ENCODE measurements at regions of chr10 and their contacts with region 1.

Region 1: GRCh38 chr10:122565728-122566206 is 5.2 kb downstream of the DMBT1 start:
- DNase-seq: peak; percentile 93
- H3K4me3 Mint-ChIP-seq: peak overlapping the region; percentile 68
- H3K27ac Mint-ChIP-seq: no peak overlapping the region
- H3K4me1 Mint-ChIP-seq: peaks cover 12% of the 10 kb centered on the region
- H3K27me3 Mint-ChIP-seq: no peaks in the 10 kb centered on the region
- CTCF ChIP-seq: peak; percentile 83

Region 2: DNA sequence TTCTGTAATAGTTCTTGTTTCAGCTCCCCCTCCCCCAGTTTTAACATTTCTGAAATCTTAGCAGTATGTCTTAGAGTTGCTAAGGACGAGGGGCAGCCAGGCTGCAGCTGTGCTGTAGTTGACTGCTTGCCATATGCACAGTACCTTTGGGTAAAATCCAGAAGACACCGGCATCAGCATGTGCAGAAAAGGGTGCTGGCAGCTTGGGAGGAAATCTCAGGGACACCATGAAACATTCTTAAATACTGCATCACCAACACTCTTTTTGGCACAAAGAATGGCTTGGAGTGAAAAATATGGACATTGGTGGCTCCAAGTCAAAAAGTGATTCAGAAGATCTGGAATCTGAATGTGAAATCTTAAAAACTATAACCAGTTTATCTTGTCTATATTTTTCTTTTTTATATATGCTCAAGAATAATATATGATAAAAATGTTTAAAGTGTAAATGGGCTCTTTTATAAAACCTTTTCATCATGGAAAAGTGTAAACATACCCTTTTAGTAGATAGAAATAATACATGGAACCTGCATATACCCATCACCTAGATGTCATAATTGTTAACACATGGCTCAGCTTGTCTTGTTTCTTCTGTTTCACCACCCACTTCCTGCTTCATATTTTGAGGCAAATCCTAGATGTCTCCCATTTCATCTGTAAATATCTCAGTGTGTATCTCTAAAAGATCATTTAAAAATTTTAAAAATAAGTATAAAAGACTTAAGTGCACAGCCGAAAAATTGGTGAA is 145.7 kb before region 1 on chr10:
- CTCF ChIA-PET with region 1: interaction called, 10 read pairs
- POLR2A ChIA-PET with region 1: no interaction called
- intact Hi-C with region 1: no loop called
- DNase-seq: peak; percentile 81
- H3K4me3 Mint-ChIP-seq: peak overlapping the region; percentile 52
- H3K27ac Mint-ChIP-seq: peak overlapping the region; percentile 91
- H3K4me1 Mint-ChIP-seq: peaks cover 44% of the 10 kb centered on the region
- H3K27me3 Mint-ChIP-seq: no peaks in the 10 kb centered on the region
- CTCF ChIP-seq: no peak

Region 3: DNA sequence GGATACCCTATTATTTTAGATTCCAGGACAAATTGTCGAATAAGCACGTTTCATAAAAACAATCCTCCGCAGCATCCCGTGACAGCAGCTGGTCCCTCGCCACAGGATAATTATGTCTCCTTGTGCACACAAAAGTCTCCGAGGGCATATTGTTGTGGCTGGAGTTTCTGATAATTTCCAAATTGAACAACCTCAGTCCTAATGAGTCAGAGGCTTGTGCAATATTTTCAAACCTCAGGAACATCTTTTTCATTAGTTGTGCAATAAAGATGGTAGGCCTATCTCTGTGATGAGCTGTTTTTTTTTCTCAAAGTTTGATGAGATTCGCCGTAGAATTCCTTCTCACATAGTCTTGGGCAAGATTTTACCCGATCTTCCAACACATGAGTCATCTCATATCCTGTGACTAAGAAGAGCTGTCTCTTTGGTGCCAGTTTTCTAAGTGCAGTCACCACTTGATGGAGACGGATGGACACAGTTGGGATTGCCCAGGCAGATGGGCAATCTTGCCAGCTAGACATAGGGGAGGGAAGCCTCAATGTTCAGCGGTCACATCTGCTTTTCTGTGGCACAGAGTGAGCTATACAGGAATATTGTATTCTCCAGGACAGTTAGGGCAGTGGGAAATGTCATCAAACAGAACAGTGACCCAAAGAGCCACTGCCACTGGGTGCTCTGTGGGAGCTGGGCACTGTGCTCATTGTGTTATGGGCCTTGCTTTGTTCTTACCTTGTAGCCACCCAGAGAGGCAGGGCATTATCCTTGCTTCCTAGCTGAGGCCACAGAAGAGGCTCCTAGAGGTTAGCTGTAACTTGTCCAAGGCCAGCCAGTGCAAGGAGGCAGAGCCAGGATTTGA is 96.6 kb before region 1 on chr10:
- CTCF ChIA-PET with region 1: interaction called, 35 read pairs
- POLR2A ChIA-PET with region 1: interaction called, 21 read pairs
- intact Hi-C with region 1: loop called (anchors 2 kb)
- DNase-seq: peak; percentile 99
- H3K4me3 Mint-ChIP-seq: peak overlapping the region; percentile 40
- H3K27ac Mint-ChIP-seq: peak overlapping the region; percentile 82
- H3K4me1 Mint-ChIP-seq: peaks cover 41% of the 10 kb centered on the region
- H3K27me3 Mint-ChIP-seq: no peaks in the 10 kb centered on the region
- CTCF ChIP-seq: no peak

Region 4: GRCh38 chr10:122510326-122510725 is 55.4 kb before region 1 on chr10:
- CTCF ChIA-PET with region 1: interaction called, 25 read pairs
- POLR2A ChIA-PET with region 1: interaction called, 7 read pairs
- intact Hi-C with region 1: loop called (anchors 5 kb)
- DNase-seq: peak; percentile 88
- H3K4me3 Mint-ChIP-seq: peak overlapping the region; percentile 24
- H3K27ac Mint-ChIP-seq: peak overlapping the region; percentile 87
- H3K4me1 Mint-ChIP-seq: peaks cover 19% of the 10 kb centered on the region
- H3K27me3 Mint-ChIP-seq: no peaks in the 10 kb centered on the region
- CTCF ChIP-seq: no peak

Region 5: DNA sequence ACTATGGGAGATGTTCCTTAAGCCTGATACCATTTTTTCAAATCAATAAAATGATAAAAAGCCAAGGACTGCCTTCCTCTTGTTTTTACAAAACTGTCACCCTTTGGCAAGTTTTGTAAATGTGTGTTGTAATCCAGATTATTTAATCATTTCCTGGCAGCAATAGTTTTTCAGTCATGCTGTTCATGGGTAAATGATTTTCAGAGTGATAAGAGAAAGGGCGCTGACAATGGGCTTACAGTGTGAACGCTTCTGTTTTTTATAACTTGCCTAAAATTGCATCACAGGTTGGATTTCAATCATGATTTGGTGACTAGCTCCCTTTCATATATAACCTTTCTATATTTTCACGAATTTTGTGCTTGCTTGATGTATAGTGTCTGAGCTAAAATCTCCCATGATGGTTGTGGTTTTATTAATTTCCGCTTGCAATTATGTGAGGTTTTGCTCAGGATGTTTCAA is 24.2 kb before region 1 on chr10:
- CTCF ChIA-PET with region 1: interaction called, 18 read pairs
- POLR2A ChIA-PET with region 1: no interaction called
- intact Hi-C with region 1: no loop called
- DNase-seq: peak; percentile 42
- H3K4me3 Mint-ChIP-seq: no peak overlapping the region
- H3K27ac Mint-ChIP-seq: no peak overlapping the region
- H3K4me1 Mint-ChIP-seq: peaks cover 13% of the 10 kb centered on the region
- H3K27me3 Mint-ChIP-seq: no peaks in the 10 kb centered on the region
- CTCF ChIP-seq: no peak

Region 6: GRCh38 chr10:122637376-122637775 is 71.6 kb after region 1 on chr10:
- CTCF ChIA-PET with region 1: no interaction called
- POLR2A ChIA-PET with region 1: no interaction called
- intact Hi-C with region 1: no loop called
- DNase-seq: no peak
- H3K4me3 Mint-ChIP-seq: no peak overlapping the region
- H3K27ac Mint-ChIP-seq: no peak overlapping the region
- H3K4me1 Mint-ChIP-seq: peaks cover 8% of the 10 kb centered on the region
- H3K27me3 Mint-ChIP-seq: no peaks in the 10 kb centered on the region
- CTCF ChIP-seq: no peak

Region 7: DNA sequence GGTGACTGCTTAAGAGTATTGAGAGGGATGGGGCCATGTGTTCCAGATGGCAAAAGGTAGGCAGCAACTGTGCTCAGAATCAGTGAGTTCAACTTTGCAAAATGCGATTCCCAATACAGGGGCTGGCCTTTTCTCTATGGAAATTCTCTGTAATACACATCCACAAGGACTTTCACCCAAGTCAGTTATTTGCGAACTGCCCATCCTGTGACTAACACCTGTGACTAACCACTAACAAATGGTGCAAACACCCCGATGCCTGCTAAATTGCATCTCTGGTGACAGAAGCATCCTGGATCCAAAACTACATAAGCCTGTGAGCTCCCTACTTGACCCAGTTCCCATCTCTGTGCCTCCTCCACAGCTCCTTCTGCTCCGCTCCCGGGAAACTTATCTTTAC is 288.9 kb after region 1 on chr10:
- CTCF ChIA-PET with region 1: no interaction called
- POLR2A ChIA-PET with region 1: no interaction called
- intact Hi-C with region 1: no loop called
- DNase-seq: peak; percentile 72
- H3K4me3 Mint-ChIP-seq: no peak overlapping the region
- H3K27ac Mint-ChIP-seq: peak overlapping the region; percentile 31
- H3K4me1 Mint-ChIP-seq: peaks cover 55% of the 10 kb centered on the region
- H3K27me3 Mint-ChIP-seq: no peaks in the 10 kb centered on the region
- CTCF ChIP-seq: no peak

Measured in MCF 10A (cell line).